Activated CD4-positive, alpha-beta T cell treated with anti-CD3 and anti-CD28 coated beads for 36 hours (primary cell): ENCODE measurements at regions of chr6 and their contacts with region 1.

Region 1: GRCh38 chr6:46129629-46130511 is at the start of gene ENPP4:
- DNase-seq: peak; percentile 92
- ATAC-seq: peak; percentile 100
- H3K4me3 Mint-ChIP-seq: peak within 1 kb of the TSS; percentile 87
- H3K27ac Mint-ChIP-seq: peak within 1 kb of the TSS; percentile 88
- H3K4me1 Mint-ChIP-seq: peaks cover 32% of the 10 kb centered on the region
- H3K27me3 Mint-ChIP-seq: no peaks in the 10 kb centered on the region
- total RNA-seq, gene ENPP4: 6.0 to 6.6 TPM

Region 2: DNA sequence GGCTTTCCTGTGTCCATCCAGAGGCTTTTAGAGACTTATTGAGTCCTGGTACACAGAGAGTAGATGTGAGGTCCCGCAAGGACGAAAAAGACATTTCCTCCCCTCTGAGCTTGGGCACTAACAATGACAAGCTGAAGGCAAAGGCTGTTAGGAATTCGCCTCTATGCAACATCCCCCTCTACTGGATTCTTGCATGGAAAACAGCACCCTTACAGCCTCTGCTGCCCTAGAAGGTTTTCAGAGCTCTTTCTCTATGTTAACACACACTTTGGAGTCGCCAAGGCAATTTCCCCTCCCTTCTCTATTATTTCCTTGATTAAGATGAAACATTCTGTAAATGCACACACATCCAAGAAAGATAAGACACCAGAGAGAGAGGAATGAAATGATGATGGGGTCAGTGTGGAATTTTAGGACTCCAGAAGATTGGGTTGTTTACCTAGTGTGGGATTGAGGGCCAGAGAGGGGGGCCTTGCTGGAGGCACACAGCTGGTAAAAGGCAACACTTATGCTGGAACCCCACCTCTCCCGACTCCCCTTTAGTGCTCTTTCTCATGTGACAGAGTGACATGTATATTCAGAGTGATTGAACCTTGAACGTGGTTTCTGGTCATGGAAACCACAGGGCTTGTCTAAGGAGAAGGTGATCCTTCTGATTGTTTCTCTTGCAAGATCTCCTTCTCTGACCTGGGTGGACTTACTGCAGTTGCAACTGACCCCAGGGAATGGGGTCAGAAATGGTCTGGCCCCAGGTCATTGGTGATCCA is 414.9 kb before region 1 on chr6:
- CTCF ChIA-PET with region 1: no interaction called
- POLR2A ChIA-PET with region 1: no interaction called
- intact Hi-C with region 1: no loop called
- DNase-seq: peak; percentile 57
- ATAC-seq: peak; percentile 43
- H3K4me3 Mint-ChIP-seq: peak overlapping the region; percentile 24
- H3K27ac Mint-ChIP-seq: peak overlapping the region; percentile 89
- H3K4me1 Mint-ChIP-seq: peaks cover 48% of the 10 kb centered on the region
- H3K27me3 Mint-ChIP-seq: peaks cover 2% of the 10 kb centered on the region

Region 3: DNA sequence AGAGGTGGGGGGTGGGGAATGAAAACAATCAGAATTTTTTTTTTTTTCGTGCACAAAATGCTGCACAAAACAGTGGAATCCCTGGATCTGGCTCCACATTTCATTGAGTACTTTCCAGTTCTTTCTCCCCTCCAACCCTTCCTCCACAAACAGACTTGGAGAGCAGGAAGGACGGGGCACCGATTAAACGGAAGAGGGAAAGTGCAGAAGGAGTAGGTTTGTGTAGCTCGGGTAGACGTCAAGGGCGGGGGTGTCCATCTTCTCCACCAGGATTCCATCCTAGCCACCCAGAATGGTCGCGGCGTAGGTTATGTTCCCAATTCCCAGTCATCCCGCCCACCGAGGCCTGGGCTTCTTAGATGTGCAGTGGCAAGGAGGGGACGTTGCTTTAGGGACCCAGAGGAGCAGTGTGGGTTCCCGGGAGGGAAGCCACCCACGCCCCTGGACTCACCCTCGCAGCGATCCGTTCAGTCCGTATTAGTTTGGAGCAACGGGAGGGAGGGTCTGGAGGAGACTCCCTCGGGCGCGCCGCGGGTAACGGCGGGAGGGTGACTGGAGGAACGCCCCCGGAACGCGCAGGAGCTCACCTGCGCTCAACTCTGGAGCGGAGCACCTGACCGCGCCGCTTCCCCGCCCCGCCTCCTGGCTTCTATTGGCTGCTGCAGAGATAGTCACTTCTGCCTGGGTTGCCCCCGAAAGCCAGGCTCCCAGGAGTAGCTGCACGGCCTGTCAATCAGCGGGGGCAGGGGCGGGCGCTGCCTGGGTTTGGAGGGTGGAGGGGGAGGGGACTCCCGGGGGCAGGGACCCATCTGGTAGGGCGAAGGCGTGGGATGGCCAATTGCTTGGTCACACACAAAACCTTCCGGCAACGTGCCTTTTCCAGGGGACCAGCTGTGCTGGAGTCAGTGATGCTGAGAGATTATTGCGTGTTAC is 40.8 kb after region 1 on chr6 and contains the start of gene ENPP5:
- CTCF ChIA-PET with region 1: no interaction called
- POLR2A ChIA-PET with region 1: no interaction called
- intact Hi-C with region 1: loop called (anchors 2 to 5 kb)
- DNase-seq: peak; percentile 84
- ATAC-seq: peak; percentile 95
- H3K4me3 Mint-ChIP-seq: peak within 1 kb of the TSS; percentile 74
- H3K27ac Mint-ChIP-seq: no peak within 1 kb of the TSS
- H3K4me1 Mint-ChIP-seq: peaks cover 15% of the 10 kb centered on the region
- H3K27me3 Mint-ChIP-seq: peaks cover 26% of the 10 kb centered on the region
- total RNA-seq, gene ENPP5: 0.16 to 0.23 TPM

Region 4: DNA sequence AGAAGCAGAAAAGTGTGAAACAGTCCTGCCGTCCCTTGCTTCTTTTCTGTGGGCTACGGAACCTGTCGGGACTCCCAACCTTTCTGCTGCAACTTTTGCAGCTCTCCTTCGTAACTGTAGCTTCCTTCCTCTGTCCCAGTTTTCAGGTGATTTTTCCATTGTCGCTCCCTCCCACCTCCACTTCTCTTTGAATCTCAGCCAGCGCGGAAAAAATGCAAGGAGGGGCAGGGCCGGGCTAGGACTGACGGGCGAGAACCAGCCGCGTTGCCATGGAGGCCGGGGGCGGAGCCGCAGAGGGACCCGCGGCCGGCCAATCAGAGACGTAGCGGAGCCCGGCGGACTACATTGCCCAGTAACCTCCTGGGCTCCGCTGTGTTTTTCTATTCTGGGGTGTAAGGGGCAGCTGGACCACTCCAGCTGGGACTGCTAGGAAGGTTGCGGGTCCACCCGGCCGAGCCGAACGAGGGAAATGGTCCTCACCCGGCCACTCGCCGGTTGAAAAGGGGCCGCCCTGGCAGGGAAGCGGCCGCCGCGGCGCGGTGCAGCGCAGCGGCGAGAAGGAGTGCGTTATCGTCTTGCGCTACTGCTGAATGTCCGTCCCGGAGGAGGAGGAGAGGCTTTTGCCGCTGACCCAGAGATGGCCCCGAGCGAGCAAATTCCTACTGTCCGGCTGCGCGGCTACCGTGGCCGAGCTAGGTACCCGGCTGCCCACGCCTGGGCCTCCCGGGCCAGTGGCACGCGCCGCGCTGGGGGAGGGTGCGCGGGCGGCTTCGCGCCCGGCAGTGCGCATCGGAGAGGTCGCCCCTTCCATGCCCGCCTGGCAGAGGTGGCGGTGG is 523.0 kb after region 1 on chr6 and contains the starts of genes CYP39A1 and SLC25A27:
- CTCF ChIA-PET with region 1: no interaction called
- POLR2A ChIA-PET with region 1: no interaction called
- intact Hi-C with region 1: loop called in 1 of 2 experiments (anchors 2 kb)
- DNase-seq: peak; percentile 91
- ATAC-seq: peak; percentile 100
- H3K4me3 Mint-ChIP-seq: peak within 1 kb of the TSS; percentile 67
- H3K27ac Mint-ChIP-seq: peak within 1 kb of the TSS; percentile 37
- H3K4me1 Mint-ChIP-seq: peaks cover 15% of the 10 kb centered on the region
- H3K27me3 Mint-ChIP-seq: peaks cover 31% of the 10 kb centered on the region
- total RNA-seq, gene CYP39A1: not detected
- total RNA-seq, gene SLC25A27: 1.2 to 1.6 TPM